ENCODE measurements at regions of chr5 and their contacts with region 1.

Region 1: DNA sequence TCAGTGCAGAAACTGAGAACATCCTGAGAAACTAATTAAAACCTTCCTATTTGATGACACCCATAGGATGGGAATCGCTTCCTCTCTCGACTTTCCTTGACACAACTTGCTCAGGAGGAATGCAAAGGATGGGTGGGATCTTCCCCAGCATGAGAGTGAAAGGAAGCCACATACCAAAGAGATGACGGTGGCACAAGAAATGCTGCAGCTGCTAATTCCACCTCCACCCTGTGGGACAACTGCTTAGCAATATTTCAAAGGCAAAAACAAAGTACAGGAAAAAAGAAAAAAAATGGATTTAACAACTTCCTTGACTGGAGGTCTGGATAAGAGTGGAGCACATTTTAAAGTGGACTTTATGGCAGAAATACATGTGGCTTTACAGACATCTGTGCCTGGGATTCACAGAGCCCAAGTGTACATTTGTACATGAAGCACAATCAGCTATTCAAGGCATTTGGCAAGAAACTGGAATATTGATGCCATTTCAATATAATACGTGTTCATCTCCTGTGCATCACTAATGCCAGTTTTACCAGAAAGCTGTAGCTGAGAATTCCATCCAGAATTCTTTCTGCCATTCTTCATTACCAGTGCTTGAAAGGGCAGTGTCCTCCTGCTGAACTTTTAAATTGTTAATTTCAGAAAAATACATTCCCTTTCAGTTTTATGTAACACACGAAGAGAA is 359.2 kb upstream of the ACTBL2 start:
- DNase-seq: peak; percentile 99
- H3K4me3 ChIP-seq: no peak overlapping the region
- H3K27ac ChIP-seq: peak overlapping the region; percentile 99
- H3K4me1 ChIP-seq: peaks cover 60% of the 10 kb centered on the region
- H3K27me3 ChIP-seq: no peaks in the 10 kb centered on the region
- CTCF ChIP-seq: no peak

Region 2: DNA sequence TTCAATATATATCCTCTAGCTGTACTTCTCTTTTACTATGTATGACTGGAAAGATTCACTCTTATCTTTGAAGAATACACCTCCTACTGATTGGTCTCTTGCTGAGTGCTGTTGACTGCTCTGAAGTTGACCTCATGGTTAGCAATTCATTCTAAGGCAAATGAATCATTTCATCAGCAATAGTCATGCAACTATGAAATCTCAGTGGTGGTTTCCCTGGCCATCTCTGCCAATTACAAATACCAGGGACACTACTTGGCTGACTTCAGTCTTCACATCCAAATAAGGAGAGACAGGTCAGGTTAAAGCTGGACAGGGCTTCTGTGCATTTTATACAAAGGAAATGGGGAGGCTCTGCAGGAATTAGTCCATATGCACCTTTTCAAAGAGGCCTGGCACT is 25.7 kb before region 1 on chr5:
- CTCF ChIA-PET with region 1: no interaction called
- dilution Hi-C with region 1: no loop called
- in situ Hi-C with region 1: no loop called
- intact Hi-C with region 1: loop called (anchors 1 kb)
- DNase-seq: peak; percentile 97
- H3K4me3 ChIP-seq: no peak overlapping the region
- H3K27ac ChIP-seq: peak overlapping the region; percentile 86
- H3K4me1 ChIP-seq: peaks cover 24% of the 10 kb centered on the region
- H3K27me3 ChIP-seq: no peaks in the 10 kb centered on the region
- CTCF ChIP-seq: no peak

Region 3: GRCh38 chr5:57825031-57825683 is 16.7 kb before region 1 on chr5:
- CTCF ChIA-PET with region 1: interaction called, 3 read pairs
- dilution Hi-C with region 1: no loop called
- in situ Hi-C with region 1: no loop called
- intact Hi-C with region 1: loop called (anchors 1 kb)
- DNase-seq: peak; percentile 89
- H3K4me3 ChIP-seq: no peak overlapping the region
- H3K27ac ChIP-seq: peak overlapping the region; percentile 99
- H3K4me1 ChIP-seq: peaks cover 36% of the 10 kb centered on the region
- H3K27me3 ChIP-seq: no peaks in the 10 kb centered on the region
- CTCF ChIP-seq: no peak

Region 4: DNA sequence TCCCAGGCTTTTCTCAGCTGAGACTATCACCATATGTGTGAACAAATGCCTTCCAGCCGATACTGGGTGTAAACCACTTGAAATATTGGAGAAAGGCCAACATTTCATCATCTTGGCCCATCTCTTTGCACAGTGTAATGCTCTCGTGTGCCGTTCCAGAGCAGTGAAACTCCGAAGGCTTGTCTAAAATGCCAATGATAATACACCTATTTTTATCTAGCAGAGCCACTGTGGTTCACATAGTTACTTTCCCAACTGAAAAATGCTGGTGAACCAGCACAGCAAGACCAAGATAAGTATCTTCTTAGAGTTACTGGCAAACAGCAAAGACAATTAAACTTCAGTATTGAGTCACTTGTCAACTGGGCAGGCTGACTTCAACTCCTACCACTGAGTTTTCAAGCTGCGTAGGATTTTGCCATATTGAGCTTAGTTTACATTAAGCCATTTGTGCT is 20.7 kb after region 1 on chr5:
- CTCF ChIA-PET with region 1: interaction called, 3 read pairs
- dilution Hi-C with region 1: no loop called
- in situ Hi-C with region 1: no loop called
- intact Hi-C with region 1: loop called (anchors 2 kb)
- DNase-seq: peak; percentile 98
- H3K4me3 ChIP-seq: no peak overlapping the region
- H3K27ac ChIP-seq: peak overlapping the region; percentile 75
- H3K4me1 ChIP-seq: peaks cover 27% of the 10 kb centered on the region
- H3K27me3 ChIP-seq: no peaks in the 10 kb centered on the region
- CTCF ChIP-seq: no peak

Region 5: GRCh38 chr5:58188262-58188651 is 346.4 kb after region 1 on chr5:
- CTCF ChIA-PET with region 1: no interaction called
- dilution Hi-C with region 1: no loop called
- in situ Hi-C with region 1: no loop called
- intact Hi-C with region 1: loop called (anchors 1 kb)
- DNase-seq: peak; percentile 91
- H3K4me3 ChIP-seq: no peak overlapping the region
- H3K27ac ChIP-seq: peak overlapping the region; percentile 86
- H3K4me1 ChIP-seq: peaks cover 44% of the 10 kb centered on the region
- H3K27me3 ChIP-seq: no peaks in the 10 kb centered on the region
- CTCF ChIP-seq: peak; percentile 33 to 45

Measured in mammary epithelial cell (primary cell).